Ascending aorta (tissue), 2 donors: ENCODE measurements at regions of chr3 and their contacts with region 1.

Region 1: DNA sequence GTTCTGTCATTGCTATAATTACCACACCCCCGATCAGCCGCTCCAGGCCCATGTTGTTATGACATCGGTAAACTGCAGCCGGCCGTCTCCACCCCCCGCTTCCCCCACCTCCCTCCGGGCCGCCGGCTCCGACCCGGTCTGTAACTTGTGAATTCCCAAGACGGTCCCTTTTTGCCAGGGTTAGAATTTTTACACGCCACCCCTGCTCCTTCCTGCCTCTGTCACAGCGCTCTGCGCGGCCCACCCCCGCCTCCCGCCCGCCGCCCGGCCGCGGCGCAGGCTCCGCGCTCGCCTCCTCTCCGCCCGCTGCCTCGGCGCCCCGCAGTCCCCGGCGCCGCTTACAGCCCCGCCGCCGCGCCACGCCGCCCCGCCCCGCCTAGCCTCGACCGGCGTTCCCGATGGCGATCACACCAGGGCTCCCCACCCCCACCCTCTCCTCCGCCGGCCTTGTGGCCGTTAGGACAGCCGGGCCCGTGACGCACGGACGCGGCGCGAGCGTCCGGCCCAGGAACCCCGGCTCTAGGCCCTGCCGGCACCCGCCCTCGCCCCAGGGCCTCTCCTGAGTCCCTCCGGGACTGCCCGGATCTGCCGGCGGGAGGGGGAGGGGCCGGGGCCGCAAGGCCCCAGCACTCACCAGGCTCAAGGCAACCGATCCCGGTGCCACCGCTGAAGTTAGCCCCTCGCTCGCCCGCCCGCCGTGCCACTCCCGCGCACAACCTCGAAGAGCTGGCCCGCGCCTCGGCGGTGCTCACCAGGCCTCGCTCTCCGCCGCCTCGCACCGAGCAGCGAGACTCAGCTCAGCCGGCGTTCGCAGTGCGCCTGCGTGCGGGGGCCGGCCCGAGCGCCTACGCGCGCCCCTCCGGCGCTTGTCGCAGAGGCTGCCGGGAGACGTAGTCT is at the start of gene KPNA1:
- DNase-seq: peak; percentile 46 to 91
- H3K4me3 ChIP-seq: peak within 1 kb of the TSS; percentile 77 to 97
- H3K27ac ChIP-seq: peak within 1 kb of the TSS; percentile 92 to 98
- H3K4me1 ChIP-seq: peaks cover 6 to 21% of the 10 kb centered on the region in 2 donors
- H3K27me3 ChIP-seq: no peaks in the 10 kb centered on the region
- CTCF ChIP-seq: no peak
- total RNA-seq, gene KPNA1: 21.1 TPM

Region 2: GRCh38 chr3:121749276-121750086 is 764.9 kb before region 1 on chr3 and contains the start of gene GOLGB1:
- intact Hi-C with region 1: loop called (anchors 10 kb)
- DNase-seq: peak; percentile 94 to 98
- H3K4me3 ChIP-seq: peak within 1 kb of the TSS; percentile 86 to 95
- H3K27ac ChIP-seq: peak within 1 kb of the TSS; percentile 92 to 97
- H3K4me1 ChIP-seq: peaks cover 2 to 19% of the 10 kb centered on the region in 2 donors
- H3K27me3 ChIP-seq: no peaks in the 10 kb centered on the region
- CTCF ChIP-seq: no peak
- total RNA-seq, gene GOLGB1: 87.9 TPM

Region 3: GRCh38 chr3:121803771-121804320 is 710.5 kb before region 1 on chr3:
- intact Hi-C with region 1: no loop called
- DNase-seq: no peak
- H3K4me3 ChIP-seq: no peak overlapping the region
- H3K27ac ChIP-seq: no peak overlapping the region
- H3K4me1 ChIP-seq: no peaks in the 10 kb centered on the region
- H3K27me3 ChIP-seq: no peaks in the 10 kb centered on the region
- CTCF ChIP-seq: no peak

Region 4: DNA sequence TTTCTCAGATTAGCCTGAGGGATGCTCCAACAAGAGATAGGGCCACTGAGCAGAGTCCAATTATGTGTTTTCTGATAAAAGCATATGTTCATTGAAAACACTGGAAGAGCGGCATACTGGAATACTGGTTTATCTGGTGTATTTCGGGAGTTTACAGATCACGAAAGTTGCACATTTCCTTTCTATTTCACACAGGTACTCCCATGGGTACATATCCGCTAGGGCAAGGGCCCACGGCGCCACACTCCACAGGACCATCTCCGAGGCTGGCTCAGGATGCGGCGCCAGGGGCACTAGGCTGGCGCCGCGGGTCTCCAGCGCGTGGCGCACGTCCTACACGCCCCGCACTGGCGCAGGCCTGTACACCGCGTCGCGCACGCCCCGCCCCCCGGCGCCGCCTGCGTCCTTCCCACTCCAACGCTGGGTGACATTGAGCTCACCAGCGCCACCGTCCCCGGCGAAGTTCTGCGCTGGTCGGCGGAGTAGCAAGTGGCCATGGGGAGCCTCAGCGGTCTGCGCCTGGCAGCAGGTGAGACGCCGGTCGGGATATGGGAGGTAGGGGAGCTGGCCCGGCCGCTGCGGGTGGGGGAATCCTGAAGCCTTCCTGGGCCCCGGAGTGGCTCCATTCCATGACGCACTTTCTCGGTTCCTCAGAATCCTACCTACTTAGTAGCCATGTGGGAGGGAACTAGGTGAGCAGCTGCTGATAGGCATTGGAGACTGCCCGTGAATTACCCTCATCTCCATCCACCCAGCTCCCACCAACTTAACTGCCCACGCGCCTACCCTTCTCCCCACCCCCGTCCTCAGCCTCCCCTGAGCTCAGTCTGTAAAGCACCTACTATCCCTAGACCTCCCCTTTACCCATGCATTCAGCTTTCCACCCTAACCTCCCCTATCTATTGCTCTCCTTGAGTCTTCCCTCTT is 130.3 kb before region 1 on chr3 and contains the start of gene FAM162A:
- intact Hi-C with region 1: loop called (anchors 10 kb)
- DNase-seq: peak; percentile 68 to 96
- H3K4me3 ChIP-seq: peak within 1 kb of the TSS; percentile 73 to 76
- H3K27ac ChIP-seq: peak within 1 kb of the TSS; percentile 82 to 90
- H3K4me1 ChIP-seq: peaks cover 0 to 6% of the 10 kb centered on the region in 2 donors
- H3K27me3 ChIP-seq: no peaks in the 10 kb centered on the region
- CTCF ChIP-seq: peak; percentile 43 to 61 (median 48)
- total RNA-seq, gene FAM162A: 17.1 TPM

Region 5: DNA sequence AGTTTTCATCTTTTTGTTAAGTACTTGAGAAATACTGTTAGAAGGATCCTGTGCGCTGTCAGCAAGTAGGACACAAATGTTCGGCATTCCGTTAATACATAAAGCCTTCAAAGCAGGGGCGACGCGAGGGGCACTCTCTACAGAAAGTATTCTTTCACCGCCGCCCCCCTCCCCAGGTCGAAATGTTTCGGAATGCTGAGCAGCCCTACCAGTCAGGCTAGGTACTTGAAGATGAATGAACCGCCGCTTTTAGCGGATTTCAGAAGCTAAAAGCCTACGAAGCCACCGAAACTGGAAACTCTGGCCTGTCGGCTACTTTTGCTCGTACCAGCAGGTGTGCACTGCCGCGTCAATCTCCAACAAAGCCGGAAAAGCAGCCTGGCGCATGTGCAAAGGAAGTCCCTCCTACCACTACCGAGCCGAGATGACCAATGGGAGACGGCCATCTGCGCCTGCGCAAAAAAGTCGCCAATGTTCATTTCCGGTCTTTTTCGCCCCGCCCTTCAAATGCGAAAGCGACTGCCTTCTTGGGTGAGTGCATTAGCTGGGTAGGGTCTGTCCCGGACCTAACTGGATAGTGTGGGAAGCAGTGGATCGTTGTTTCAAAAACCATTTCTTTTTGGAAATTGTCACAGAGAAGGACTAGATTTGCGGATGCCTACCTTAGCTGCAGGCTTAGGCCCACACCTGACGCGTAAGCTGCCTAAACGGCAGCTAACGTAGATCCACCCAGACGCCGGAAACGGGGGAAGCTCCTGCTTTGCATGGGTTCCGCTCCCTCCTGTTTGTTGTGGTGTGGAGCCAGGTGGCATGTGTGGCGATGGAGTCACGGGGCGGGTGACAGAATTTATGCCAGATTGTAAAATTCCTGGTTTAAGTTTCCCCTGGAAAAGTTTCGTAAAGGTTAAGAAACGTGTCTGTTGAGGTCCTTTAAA is 98.4 kb before region 1 on chr3 and contains the start of gene WDR5B:
- intact Hi-C with region 1: loop called (anchors 2 kb)
- DNase-seq: peak; percentile 86 to 98
- H3K4me3 ChIP-seq: peak within 1 kb of the TSS; percentile 84 to 94
- H3K27ac ChIP-seq: peak within 1 kb of the TSS; percentile 91 to 94
- H3K4me1 ChIP-seq: peaks cover 8 to 16% of the 10 kb centered on the region in 2 donors
- H3K27me3 ChIP-seq: no peaks in the 10 kb centered on the region
- CTCF ChIP-seq: no peak
- total RNA-seq, gene WDR5B: 1.8 TPM

Region 6: GRCh38 chr3:122458992-122459391 is 55.4 kb before region 1 on chr3:
- intact Hi-C with region 1: loop called (anchors 1 kb)
- DNase-seq: no peak
- H3K4me3 ChIP-seq: no peak overlapping the region
- H3K27ac ChIP-seq: no peak overlapping the region
- H3K4me1 ChIP-seq: no peaks in the 10 kb centered on the region
- H3K27me3 ChIP-seq: no peaks in the 10 kb centered on the region
- CTCF ChIP-seq: peak in 2 of 3 experiments; percentile 19 to 40

Region 7: GRCh38 chr3:122564155-122564912 is 50.0 kb after region 1 on chr3 and contains the starts of genes DTX3L and PARP9:
- intact Hi-C with region 1: loop called (anchors 1 kb)
- DNase-seq: peak; percentile 29 to 88
- H3K4me3 ChIP-seq: peak within 1 kb of the TSS; percentile 90 to 94
- H3K27ac ChIP-seq: peak within 1 kb of the TSS; percentile 87 to 91
- H3K4me1 ChIP-seq: peaks cover 4 to 16% of the 10 kb centered on the region in 2 donors
- H3K27me3 ChIP-seq: no peaks in the 10 kb centered on the region
- CTCF ChIP-seq: no peak
- total RNA-seq, gene DTX3L: 22.4 TPM
- total RNA-seq, gene PARP9: 8.1 TPM

Region 8: GRCh38 chr3:122793568-122794416 is 279.4 kb after region 1 on chr3 and contains the start of gene HSPBAP1:
- intact Hi-C with region 1: loop called (anchors 5 kb)
- DNase-seq: peak; percentile 74 to 96
- H3K4me3 ChIP-seq: peak within 1 kb of the TSS; percentile 89 to 98
- H3K27ac ChIP-seq: peak within 1 kb of the TSS; percentile 96 to 100
- H3K4me1 ChIP-seq: peaks cover 3 to 5% of the 10 kb centered on the region in 2 donors
- H3K27me3 ChIP-seq: no peaks in the 10 kb centered on the region
- CTCF ChIP-seq: no peak
- total RNA-seq, gene HSPBAP1: 2.4 TPM

Region 9: GRCh38 chr3:123365450-123366143 is 851.2 kb after region 1 on chr3:
- intact Hi-C with region 1: no loop called
- DNase-seq: no peak
- H3K4me3 ChIP-seq: no peak overlapping the region
- H3K27ac ChIP-seq: peak overlapping the region; percentile 13 to 47
- H3K4me1 ChIP-seq: peaks cover 9 to 45% of the 10 kb centered on the region in 2 donors
- H3K27me3 ChIP-seq: no peaks in the 10 kb centered on the region
- CTCF ChIP-seq: peak; percentile 37 to 56 (median 56)